Naive thymus-derived CD4-positive, alpha-beta T cell (primary cell): ENCODE measurements at regions of chr12 and their contacts with region 1.

Region 1: DNA sequence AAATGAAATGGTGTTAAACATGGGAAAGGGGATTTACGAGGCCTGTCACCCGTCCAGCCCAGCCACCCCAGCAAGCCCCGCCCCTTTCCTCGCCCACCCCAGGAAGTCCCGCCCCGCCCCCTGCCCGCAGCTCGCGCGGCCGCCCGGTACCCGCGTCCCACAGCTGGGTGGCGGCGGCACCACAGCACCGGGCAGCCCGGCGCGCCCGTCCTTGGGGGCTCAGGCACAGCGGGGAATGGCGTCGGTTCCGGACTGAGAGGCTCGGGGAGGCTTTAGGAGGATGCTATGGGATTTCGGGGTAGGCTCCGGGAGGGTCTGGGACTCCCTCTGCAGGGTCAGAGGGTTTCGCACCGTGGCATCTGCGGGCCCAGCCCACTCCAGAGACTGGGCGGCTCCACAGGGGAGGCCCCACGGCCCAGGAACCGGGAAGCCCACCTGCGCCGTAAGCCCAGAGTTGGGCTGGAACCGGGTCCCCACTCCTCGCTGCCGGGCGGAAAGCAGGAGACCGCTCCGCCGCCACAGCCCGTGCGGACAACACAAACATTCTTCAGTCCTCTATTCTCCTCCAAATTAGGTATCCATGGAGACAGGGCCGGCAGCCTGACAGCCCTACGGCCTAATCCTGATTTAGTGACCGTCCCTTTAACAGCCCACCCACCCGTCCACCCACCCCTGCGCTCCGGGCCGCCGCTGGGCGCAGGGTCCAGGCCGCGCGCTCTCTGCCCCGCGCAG is 1.4 kb downstream of the FIGNL2 start:
- DNase-seq: peak in 5 of 9 donors; percentile 8 to 50 (median 25)
- ATAC-seq: peak; percentile 66
- H3K4me3 ChIP-seq: peak overlapping the region; percentile 37
- H3K4me3 Mint-ChIP-seq: peak overlapping the region; percentile 72 to 91 (median 84)
- H3K27ac ChIP-seq: no peak overlapping the region
- H3K27ac Mint-ChIP-seq: peak overlapping the region in 1 of 9 donors; percentile 56
- H3K4me1 ChIP-seq: peaks cover 0 to 9% of the 10 kb centered on the region in 2 donors
- H3K4me1 Mint-ChIP-seq: peaks cover 11 to 36% (median 28%) of the 10 kb centered on the region in 7 donors
- H3K27me3 ChIP-seq: peaks cover 3 to 24% of the 10 kb centered on the region in 2 donors
- H3K27me3 Mint-ChIP-seq: peaks cover 30 to 68% (median 35%) of the 10 kb centered on the region in 5 donors

Region 2: DNA sequence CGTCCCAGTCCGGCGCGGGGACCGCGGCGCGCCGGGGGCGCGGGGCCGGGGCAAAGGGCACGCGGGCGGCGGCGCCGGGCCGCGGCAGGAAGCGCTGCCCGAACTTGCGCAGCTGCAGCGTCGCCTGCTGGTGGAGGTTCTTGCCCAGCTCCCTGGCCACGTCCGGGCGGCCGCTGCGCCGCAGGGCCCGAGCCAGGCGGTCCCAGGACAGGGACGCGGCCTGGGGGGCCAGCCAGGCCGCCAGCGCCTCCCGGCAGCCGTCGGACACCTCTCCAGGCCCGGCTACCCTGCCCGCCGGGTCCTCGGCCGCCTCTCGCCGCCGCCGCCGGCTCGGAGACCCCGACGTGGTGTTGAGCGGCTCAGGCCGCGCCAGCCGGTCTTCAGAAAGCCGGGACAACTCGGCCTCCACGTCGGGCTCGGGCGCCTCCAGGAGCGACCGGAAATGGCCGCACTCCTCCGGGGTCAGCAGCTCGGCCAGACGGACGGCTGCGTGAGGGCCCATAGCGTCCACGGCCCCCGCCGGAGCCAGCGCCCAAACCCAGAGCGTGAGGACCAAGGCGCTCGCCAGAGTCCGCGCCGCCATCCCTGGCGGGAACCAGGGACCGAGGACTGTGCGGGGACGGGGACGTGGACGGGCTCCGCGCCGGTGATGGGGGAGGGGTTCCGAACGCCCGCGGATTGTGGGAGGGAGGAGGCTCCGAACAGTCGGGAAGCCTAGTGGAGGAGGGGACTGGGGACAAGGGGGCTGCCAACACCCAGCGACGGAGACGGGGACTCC is 32.6 kb before region 1 on chr12:
- CTCF ChIA-PET with region 1: no interaction called
- POLR2A ChIA-PET with region 1: no interaction called
- intact Hi-C with region 1: loop called in 1 of 2 experiments (anchors 2 kb)
- DNase-seq: peak; percentile 22 to 74 (median 61)
- ATAC-seq: peak; percentile 94
- H3K4me3 ChIP-seq: peak overlapping the region; percentile 57
- H3K4me3 Mint-ChIP-seq: peak overlapping the region; percentile 77 to 89 (median 86)
- H3K27ac ChIP-seq: peak overlapping the region; percentile 66
- H3K27ac Mint-ChIP-seq: peak overlapping the region in 6 of 9 donors; percentile 17 to 94 (median 73)
- H3K4me1 ChIP-seq: peaks cover 4 to 7% of the 10 kb centered on the region in 2 donors
- H3K4me1 Mint-ChIP-seq: peaks cover 9 to 19% (median 11%) of the 10 kb centered on the region in 7 donors
- H3K27me3 ChIP-seq: no peaks in the 10 kb centered on the region
- H3K27me3 Mint-ChIP-seq: peaks cover 0 to 48% (median 0%) of the 10 kb centered on the region in 5 donors